Activated T-helper 2 cell treated with anti-CD3 and anti-CD28 coated beads, Interferon-gamma antibody, Interleukin-2, Interleukin-4, amounts not matched to agents 10 μg/mL and 5 μg/mL and 100 μg/mL, durations not matched to agents 14 hours and 24 hours and 36 hours (primary cell): ENCODE measurements at regions of chr22 and their contacts with region 1.

Region 1: GRCh38 chr22:29267858-29268417 is at the starts of genes EWSR1 and RHBDD3:
- DNase-seq: peak; percentile 96
- H3K4me3 Mint-ChIP-seq: peak within 1 kb of the TSS; percentile 86
- H3K27ac Mint-ChIP-seq: peak within 1 kb of the TSS; percentile 94
- H3K4me1 Mint-ChIP-seq: peaks cover 34% of the 10 kb centered on the region
- H3K27me3 Mint-ChIP-seq: no peaks in the 10 kb centered on the region
- total RNA-seq, gene EWSR1: 425 and 436 TPM in 2 replicates
- total RNA-seq, gene RHBDD3: 46.0 and 48.0 TPM in 2 replicates

Region 2: DNA sequence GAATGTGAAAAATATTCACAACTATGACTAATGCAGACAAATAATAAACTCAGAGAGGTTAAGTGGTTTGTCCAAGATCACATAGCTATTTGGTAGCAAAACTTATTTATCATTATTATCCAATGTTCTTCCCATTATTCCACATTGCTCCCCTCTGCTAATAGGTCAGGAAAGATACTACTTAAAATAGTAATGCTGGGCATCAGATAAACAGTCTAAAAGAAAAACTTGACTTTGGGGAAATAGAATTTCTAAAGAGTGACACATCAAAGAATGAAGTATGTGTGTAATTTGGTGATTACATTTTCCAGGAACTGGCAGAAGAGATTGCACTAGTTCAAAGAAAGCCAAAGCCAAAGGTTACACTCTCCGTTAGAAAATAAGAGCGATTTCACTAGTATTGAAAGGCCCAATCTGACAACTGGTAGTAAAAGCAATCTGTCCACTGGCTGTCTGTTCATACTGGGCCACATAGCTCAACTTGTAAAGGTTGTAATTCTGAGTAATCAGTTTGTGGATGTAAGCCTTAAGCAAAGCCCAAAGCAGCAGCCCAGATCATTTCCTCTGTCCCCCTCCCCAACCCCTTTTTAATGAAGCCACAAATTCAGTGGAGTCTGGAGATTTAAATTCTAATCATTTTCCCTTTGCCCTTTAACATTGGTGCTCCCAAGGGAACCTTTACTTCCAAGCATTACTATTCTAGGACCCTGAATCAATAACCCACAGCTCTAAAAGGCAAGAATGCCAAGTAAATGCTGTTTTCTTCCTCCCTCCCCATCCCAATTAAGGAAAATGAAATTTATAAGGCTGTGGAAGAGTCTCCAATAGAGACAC is 871.8 kb before region 1 on chr22:
- intact Hi-C with region 1: loop called (anchors 10 kb)
- DNase-seq: no peak
- H3K4me3 Mint-ChIP-seq: peak overlapping the region; percentile 14
- H3K27ac Mint-ChIP-seq: peak overlapping the region; percentile 62
- H3K4me1 Mint-ChIP-seq: peaks cover 51% of the 10 kb centered on the region
- H3K27me3 Mint-ChIP-seq: no peaks in the 10 kb centered on the region

Region 3: GRCh38 chr22:29251981-29252911 is 15.7 kb before region 1 on chr22:
- intact Hi-C with region 1: no loop called
- DNase-seq: no peak
- H3K4me3 Mint-ChIP-seq: no peak overlapping the region
- H3K27ac Mint-ChIP-seq: no peak overlapping the region
- H3K4me1 Mint-ChIP-seq: peaks cover 6% of the 10 kb centered on the region
- H3K27me3 Mint-ChIP-seq: peaks cover 5% of the 10 kb centered on the region

Region 4: DNA sequence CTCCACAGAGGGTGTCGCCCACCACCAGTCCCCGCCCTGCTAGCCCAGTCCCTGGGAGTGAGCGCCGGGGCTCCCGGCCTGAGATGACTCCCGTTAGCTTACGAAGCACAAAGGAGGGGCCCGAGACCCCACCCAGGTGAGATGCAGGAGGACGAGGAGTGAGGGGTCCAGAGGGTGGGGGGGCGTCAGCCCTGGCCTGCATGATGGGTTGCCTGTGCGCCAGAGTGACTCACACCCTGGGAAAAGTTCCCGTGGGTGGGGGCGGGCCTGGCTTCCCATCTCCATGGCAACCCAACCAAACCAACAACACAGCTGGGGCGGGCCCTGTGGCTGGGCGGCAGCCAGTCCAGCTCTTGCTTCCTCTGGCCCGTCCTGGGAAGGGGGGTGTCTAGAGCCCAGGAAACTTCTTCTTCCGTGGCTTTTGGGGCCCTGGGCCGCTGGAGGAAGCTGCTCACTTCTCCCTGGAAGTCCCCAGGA is 43.0 kb after region 1 on chr22:
- intact Hi-C with region 1: loop called (anchors 5 kb)
- DNase-seq: peak; percentile 56
- H3K4me3 Mint-ChIP-seq: no peak overlapping the region
- H3K27ac Mint-ChIP-seq: no peak overlapping the region
- H3K4me1 Mint-ChIP-seq: peaks cover 24% of the 10 kb centered on the region
- H3K27me3 Mint-ChIP-seq: peaks cover 30% of the 10 kb centered on the region

Region 5: GRCh38 chr22:29387921-29388758 is 120.2 kb after region 1 on chr22 and contains the start of gene AP1B1:
- intact Hi-C with region 1: loop called (anchors 1 kb)
- DNase-seq: peak; percentile 92
- H3K4me3 Mint-ChIP-seq: peak within 1 kb of the TSS; percentile 89
- H3K27ac Mint-ChIP-seq: peak within 1 kb of the TSS; percentile 87
- H3K4me1 Mint-ChIP-seq: peaks cover 22% of the 10 kb centered on the region
- H3K27me3 Mint-ChIP-seq: no peaks in the 10 kb centered on the region
- total RNA-seq, gene AP1B1: 73.4 and 76.4 TPM in 2 replicates